ENCODE measurements at regions of chr4 and their contacts with region 1.

Region 1: GRCh38 chr4:112938461-112939058 is 110.9 kb upstream of the ANK2 start:
- DNase-seq: peak; percentile 1
- H3K4me3 ChIP-seq: no peak overlapping the region
- H3K27ac ChIP-seq: no peak overlapping the region
- H3K27me3 ChIP-seq: no peaks in the 10 kb centered on the region
- CTCF ChIP-seq: peak; percentile 74

Region 2: GRCh38 chr4:112327965-112328733 is 610.4 kb before region 1 on chr4:
- CTCF ChIA-PET with region 1: interaction called, 14 read pairs
- POLR2A ChIA-PET with region 1: no interaction called
- DNase-seq: peak; percentile 29
- H3K4me3 ChIP-seq: no peak overlapping the region
- H3K27ac ChIP-seq: no peak overlapping the region
- H3K27me3 ChIP-seq: no peaks in the 10 kb centered on the region
- CTCF ChIP-seq: peak; percentile 69

Region 3: GRCh38 chr4:112747036-112747435 is 191.5 kb before region 1 on chr4:
- CTCF ChIA-PET with region 1: no interaction called
- POLR2A ChIA-PET with region 1: no interaction called
- DNase-seq: no peak
- H3K4me3 ChIP-seq: no peak overlapping the region
- H3K27ac ChIP-seq: no peak overlapping the region
- H3K27me3 ChIP-seq: no peaks in the 10 kb centered on the region
- CTCF ChIP-seq: no peak

Region 4: DNA sequence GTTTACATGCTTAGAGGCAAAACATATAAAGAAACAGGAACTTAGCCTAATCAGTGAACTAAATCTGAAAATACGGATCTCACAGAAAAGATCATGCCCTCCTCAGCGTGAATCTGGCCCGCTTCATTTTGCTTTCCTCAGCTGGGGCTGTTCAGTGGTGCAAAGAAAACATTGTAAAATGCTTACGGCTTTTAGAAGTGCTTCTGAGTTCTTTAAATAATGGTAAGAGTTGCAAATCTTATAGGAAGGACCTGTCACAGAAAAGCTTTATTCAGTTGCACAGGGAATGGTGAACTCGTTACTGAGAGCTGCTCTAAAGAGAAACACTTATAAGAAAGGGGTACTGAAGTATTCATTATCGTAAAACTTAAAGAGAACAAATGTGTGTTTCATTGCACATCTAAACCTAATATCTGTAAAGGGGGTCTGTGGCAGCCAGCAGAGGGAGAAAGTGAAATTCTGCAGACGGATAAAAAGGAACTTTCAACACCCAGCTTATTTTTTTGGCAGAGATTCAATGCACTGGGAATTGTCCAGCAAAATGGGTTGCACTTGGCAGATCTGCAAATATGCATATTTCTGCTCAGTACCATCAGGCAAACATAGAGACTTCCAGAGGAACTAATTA is 28.3 kb before region 1 on chr4:
- CTCF ChIA-PET with region 1: interaction called, 10 read pairs
- POLR2A ChIA-PET with region 1: no interaction called
- DNase-seq: no peak
- H3K4me3 ChIP-seq: no peak overlapping the region
- H3K27ac ChIP-seq: no peak overlapping the region
- H3K27me3 ChIP-seq: no peaks in the 10 kb centered on the region
- CTCF ChIP-seq: no peak

Region 5: DNA sequence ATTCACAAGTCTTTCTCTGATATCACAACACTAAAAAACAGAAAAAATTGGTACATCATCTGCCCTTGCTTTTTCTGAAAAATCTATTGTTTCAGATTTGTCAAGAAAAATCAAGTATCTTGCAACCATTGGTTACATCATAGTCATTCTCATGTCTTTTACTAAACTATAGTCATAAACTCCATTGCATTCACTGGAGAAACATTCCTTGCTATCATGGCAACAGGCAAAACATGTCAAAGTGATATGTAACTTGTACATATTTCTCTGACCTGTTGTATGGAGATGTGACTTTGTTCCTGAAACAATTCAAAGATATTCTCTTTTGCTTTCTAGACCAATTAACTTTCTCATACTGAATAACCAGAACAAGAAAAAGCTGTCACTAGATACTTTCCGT is 11.0 kb before region 1 on chr4:
- CTCF ChIA-PET with region 1: interaction called, 47 read pairs
- POLR2A ChIA-PET with region 1: no interaction called
- DNase-seq: no peak
- H3K4me3 ChIP-seq: no peak overlapping the region
- H3K27ac ChIP-seq: no peak overlapping the region
- H3K27me3 ChIP-seq: no peaks in the 10 kb centered on the region
- CTCF ChIP-seq: no peak

Region 6: DNA sequence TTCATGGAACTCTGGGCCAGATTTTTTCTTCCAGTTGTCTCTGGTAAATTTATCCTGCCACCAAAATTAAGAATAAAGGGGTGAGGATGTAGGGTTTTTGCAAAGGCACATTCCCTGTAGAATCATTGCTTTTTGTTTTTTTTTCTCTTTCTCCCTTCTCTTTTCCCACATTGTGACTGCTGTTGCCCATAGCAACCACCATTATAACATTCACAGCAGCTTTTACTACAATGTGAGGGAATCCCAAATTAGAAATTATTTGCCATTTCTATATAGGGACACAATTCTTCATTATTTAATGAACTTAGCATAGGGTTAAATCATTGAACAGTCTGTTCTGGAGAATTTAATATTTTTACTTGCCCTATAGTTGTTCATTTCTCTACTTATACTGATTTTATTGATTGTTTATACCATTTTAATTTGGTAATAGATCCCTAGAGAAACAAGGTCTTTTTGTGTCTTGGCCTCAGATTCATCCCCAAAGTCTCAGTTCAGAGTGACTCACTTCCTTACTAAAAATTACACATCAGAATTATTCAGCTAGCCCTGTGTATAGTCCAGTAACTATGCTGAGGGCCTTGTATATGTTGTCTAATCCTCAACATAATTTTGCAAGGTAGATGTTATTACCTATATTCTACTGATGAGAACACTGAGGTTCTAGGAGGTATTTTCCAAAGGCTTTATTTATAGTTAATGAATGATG is 30.0 kb after region 1 on chr4:
- CTCF ChIA-PET with region 1: interaction called, 12 read pairs
- POLR2A ChIA-PET with region 1: no interaction called
- DNase-seq: no peak
- H3K4me3 ChIP-seq: no peak overlapping the region
- H3K27ac ChIP-seq: no peak overlapping the region
- H3K27me3 ChIP-seq: no peaks in the 10 kb centered on the region
- CTCF ChIP-seq: no peak

Region 7: GRCh38 chr4:113012786-113013185 is 74.2 kb after region 1 on chr4:
- CTCF ChIA-PET with region 1: no interaction called
- POLR2A ChIA-PET with region 1: no interaction called
- DNase-seq: no peak
- H3K4me3 ChIP-seq: no peak overlapping the region
- H3K27ac ChIP-seq: no peak overlapping the region
- H3K27me3 ChIP-seq: no peaks in the 10 kb centered on the region
- CTCF ChIP-seq: no peak